Transverse colon (tissue), 4 donors: ENCODE measurements at regions of chr4 and their contacts with region 1.

Region 1: DNA sequence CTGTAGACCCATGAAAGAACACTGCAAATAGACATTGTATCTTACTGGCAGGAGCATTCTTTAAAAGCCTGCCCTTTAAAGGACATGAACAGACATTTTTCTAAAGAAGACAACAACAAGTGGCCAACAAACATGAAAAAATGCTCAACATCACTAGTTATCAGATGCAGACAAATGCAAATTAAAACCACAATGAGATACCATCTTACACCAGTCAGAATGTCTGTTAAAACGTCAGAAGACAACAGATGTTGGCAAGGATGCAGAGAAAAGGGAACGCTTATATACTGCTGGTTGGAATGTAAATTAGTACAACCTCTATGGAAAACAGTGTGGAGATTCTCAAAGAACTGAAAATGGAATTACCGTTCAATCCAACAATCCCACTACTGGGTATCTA is 77.2 kb downstream of the ATP10D start:
- DNase-seq: no peak
- H3K4me3 ChIP-seq: no peak overlapping the region
- H3K27ac ChIP-seq: no peak overlapping the region
- H3K4me1 ChIP-seq: peaks cover 0 to 6% (median 0%) of the 10 kb centered on the region in 4 donors
- H3K27me3 ChIP-seq: no peaks in the 10 kb centered on the region
- CTCF ChIP-seq: no peak
- EP300 ChIP-seq: no peak
- POLR2A ChIP-seq: no peak

Region 2: DNA sequence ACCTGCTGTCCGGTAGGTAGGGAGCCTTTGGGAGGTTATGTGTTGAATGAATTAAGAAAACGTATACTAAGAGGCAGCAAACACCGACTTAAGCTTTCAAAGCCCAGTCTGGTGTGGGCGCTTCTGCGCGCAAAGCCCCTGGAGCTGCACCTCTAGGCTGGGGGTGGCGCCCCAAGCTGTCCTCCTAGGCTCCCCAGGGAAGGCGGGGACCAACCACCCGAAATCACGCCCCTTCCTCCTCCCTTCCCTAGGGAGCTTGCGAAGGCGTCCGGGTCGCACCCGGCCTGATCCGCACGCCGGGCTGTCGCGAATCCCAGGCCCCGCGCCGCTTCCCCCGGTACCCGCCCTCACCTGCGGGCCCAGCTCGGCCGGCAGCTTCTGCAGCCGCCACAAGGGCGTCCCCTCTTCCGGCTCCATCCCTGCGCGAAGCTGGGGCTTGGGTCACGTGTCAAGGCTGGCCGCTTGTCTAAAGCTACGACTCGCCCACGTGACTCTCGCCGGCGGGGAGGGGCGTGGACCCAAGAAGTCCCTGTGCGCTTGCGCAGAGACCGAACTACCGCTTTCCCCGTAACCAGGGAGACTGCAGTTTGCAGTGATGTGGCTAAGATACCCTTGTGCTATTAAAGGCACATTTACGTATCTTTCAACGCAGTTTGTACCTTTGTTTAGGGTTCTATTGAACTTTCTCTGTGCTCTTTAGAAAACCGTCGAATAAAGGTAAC is 98.9 kb before region 1 on chr4 and contains the start of gene COMMD8:
- in situ Hi-C with region 1: no loop called
- intact Hi-C with region 1: loop called (anchors 10 kb)
- DNase-seq: peak; percentile 98
- H3K4me3 ChIP-seq: peak within 1 kb of the TSS; percentile 84 to 96 (median 86)
- H3K27ac ChIP-seq: peak within 1 kb of the TSS; percentile 87 to 93 (median 90)
- H3K4me1 ChIP-seq: peaks cover 6 to 10% (median 8%) of the 10 kb centered on the region in 4 donors
- H3K27me3 ChIP-seq: no peaks in the 10 kb centered on the region
- CTCF ChIP-seq: peak in 4 of 5 experiments; percentile 29 to 68 (median 44)
- EP300 ChIP-seq: no peak
- POLR2A ChIP-seq: peak; percentile 70
- total RNA-seq, gene COMMD8: 0.80 to 20.2 (median 8.2) TPM

Region 3: GRCh38 chr4:47538495-47539154 is 23.7 kb before region 1 on chr4:
- in situ Hi-C with region 1: no loop called
- intact Hi-C with region 1: no loop called
- DNase-seq: no peak
- H3K4me3 ChIP-seq: no peak overlapping the region
- H3K27ac ChIP-seq: no peak overlapping the region
- H3K4me1 ChIP-seq: no peaks in the 10 kb centered on the region
- H3K27me3 ChIP-seq: no peaks in the 10 kb centered on the region
- CTCF ChIP-seq: no peak
- EP300 ChIP-seq: no peak
- POLR2A ChIP-seq: no peak